ENCODE measurements at regions of chr20 and their contacts with region 1.

Region 1: DNA sequence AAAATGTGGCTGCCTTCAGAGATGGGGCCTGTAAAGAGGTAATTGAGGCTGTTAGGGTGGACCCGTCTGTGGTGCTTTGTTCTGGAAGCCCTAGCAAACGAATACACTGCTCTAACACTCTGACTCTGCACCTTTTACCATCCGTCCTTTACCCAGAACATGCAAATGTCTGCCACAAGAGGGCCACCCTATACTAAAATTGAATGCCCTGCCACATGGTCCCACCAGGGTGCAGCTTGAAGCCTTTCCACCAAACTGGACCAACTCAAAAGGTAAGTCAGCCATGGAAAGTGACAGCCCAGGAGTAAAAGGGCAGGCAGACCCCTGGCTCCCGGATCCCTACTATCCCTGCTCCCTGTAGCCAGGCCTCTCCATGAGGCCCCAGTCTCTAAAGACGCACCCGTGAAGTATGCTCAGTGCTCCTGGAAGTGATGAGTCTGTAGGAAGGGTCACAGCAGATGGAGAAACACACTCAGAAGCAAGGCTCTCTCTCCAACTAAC is 5.8 kb upstream of the BFSP1 start:
- DNase-seq: peak; percentile 75
- H3K4me3 ChIP-seq: no peak overlapping the region
- H3K27ac ChIP-seq: no peak overlapping the region
- H3K4me1 ChIP-seq: no peaks in the 10 kb centered on the region
- H3K27me3 ChIP-seq: no peaks in the 10 kb centered on the region
- CTCF ChIP-seq: peak; percentile 74 to 97 (median 93)
- POLR2A ChIP-seq: no peak

Region 2: DNA sequence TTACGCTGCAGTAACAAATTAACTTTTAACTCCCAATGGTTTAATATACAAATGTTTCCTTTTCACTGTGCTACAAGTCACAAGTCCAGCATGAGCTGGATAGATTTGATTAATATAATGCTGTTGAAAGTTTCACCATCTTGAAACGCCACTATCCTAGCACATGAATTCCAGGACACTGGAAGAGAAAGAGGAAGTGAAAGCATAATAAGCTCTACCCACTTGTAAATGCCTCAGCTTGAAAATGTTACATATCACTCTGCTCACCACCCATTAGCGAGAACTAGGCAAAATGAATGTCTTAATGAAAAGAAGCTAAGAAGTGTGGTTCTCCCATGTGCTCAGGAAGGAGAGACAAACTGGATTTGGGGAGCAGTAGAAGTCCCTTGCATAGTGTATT is 263.3 kb before region 1 on chr20:
- intact Hi-C with region 1: no loop called
- DNase-seq: no peak
- H3K4me3 ChIP-seq: no peak overlapping the region
- H3K27ac ChIP-seq: no peak overlapping the region
- H3K4me1 ChIP-seq: no peaks in the 10 kb centered on the region
- H3K27me3 ChIP-seq: no peaks in the 10 kb centered on the region
- CTCF ChIP-seq: no peak
- POLR2A ChIP-seq: no peak

Region 3: DNA sequence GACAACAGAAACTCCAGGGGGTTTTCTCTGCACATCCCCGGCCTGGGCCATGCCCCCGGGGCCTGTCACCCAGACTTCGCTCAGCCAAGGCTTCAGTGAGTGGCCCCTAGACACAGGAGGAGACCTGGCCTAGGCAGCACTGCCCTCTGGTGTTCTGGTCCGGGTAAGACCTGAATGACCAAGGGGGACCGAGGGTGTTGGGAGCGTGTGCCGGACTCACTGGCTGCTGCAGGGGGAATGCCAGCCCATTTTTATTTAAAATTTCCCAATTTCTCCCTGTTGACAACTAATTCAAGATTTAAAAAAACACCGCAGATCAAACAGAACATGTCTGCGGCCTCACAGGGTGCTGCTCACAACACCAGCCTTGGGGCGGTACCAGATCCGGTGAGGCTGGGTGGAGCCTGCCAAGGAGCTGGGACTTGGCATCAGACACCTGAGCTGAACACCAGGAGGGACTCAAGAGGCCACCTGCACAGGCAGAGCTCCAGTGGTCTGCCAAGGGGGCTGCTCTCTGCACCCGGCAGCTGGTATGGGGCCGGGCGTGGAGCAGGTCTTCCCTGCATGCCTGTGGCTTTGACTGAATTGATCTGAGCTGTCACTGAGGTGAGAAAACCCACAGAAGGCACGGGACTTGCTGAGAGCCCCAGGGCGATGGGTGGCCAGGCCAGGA is 80.7 kb after region 1 on chr20:
- intact Hi-C with region 1: loop called (anchors 1 kb)
- DNase-seq: peak; percentile 74
- H3K4me3 ChIP-seq: no peak overlapping the region
- H3K27ac ChIP-seq: peak overlapping the region in 1 of 2 donors; percentile 18
- H3K4me1 ChIP-seq: peaks cover 3% of the 10 kb centered on the region
- H3K27me3 ChIP-seq: no peaks in the 10 kb centered on the region
- CTCF ChIP-seq: peak; percentile 78 to 96 (median 86)
- POLR2A ChIP-seq: no peak

Region 4: DNA sequence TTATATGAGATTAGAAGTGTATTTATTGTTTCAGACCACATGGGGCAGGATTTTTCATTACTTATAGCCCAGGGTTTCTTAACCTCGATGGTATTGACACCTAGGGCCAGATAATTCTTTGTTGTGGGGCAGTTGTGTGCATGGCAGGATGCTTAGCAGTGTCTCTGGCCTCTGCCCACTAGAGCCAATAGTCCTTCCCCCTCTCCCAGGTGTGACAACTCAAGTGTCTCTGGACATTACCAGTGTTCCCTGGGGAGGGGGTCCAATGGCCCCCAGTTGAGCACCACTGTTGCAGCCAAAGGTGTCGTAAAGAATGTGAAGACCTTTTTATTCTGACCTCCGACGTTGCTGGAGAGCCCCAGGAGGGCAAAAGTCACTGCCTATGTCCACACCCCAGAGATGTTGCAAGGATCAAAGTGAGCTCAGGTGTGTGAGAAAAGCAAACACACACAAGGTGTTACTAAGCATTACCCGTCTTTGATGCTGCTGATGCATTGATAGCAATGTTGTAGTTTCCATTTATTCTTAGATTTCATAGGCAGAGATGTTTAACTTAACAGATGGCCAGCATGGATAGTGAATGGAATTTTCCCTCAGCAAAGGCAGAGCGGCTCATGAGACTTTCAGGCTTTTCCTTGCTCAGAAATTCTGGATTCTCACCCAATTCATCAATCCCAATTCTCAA is 184.9 kb after region 1 on chr20:
- intact Hi-C with region 1: no loop called
- DNase-seq: no peak
- H3K4me3 ChIP-seq: no peak overlapping the region
- H3K27ac ChIP-seq: no peak overlapping the region
- H3K4me1 ChIP-seq: no peaks in the 10 kb centered on the region
- H3K27me3 ChIP-seq: no peaks in the 10 kb centered on the region
- CTCF ChIP-seq: no peak
- POLR2A ChIP-seq: no peak